ENCODE measurements at regions of chr19 and their contacts with region 1.

Region 1: DNA sequence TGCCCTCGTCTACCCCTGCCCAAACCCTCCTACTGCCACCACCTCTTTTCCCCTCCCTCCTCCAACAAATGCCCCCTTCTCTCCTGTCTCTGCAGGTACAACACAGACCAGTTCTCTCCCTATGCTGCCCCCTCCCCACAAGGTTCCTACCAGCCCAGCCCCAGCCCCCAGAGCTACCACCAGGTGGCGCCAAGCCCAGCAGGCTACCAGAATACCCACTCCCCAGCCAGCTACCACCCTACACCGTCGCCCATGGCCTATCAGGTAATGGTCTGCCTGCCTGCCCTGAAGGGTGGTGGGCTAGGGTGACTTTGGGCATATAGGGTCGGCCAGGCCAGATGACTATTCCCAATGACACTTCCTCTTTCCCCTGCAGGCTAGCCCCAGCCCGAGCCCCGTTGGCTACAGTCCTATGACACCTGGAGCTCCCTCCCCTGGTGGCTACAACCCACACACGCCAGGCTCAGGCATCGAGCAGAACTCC is 6.5 kb upstream of the TIMM50 start:
- DNase-seq: peak; percentile 90
- ATAC-seq: peak; percentile 90
- H3K4me3 Mint-ChIP-seq: no peak overlapping the region
- H3K27ac Mint-ChIP-seq: peak overlapping the region; percentile 56; the same call in 1 of the 2 replicates
- H3K4me1 Mint-ChIP-seq: peaks cover 3% of the 10 kb centered on the region; the same call in 1 of the 2 replicates
- H3K27me3 Mint-ChIP-seq: no peaks in the 10 kb centered on the region
- CTCF ChIP-seq: peak; percentile 93

Region 2: DNA sequence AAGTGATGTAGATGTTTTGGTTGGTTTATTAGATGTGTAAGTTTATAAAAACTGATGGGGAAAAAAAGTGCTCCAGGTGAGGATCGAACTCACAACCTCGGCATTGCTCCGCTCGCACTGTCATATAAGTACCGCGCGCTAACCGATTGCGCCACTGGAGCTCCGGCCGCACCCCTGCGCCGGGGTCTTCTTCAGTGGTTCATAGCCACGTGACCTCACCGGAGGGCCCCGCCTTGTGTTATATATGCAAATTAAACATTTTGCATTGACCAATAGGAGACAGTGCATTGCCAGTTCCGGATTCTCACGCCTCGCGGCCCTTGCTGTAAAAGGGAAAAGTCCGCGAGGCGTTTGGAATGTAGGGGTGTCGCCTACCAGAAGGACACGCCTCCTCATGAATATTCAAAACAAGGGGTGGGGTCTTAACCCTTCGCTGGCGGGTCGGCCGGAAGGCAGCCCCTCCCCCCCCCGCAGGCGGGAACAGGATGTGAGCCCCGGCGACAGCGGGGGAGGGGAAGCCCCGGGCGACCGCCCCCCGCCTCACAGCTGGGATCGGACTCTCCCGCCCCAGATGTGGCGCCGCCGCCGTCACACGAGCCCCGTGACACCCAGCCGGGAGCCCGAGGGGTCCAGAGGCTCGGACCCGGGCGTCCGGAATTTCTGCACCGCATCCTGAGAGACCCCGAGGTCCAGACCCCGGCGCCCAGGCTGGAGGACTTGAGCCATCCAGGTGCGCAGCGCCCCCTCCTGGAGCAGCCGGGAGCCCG is 61.9 kb before region 1 on chr19 and contains the start of gene PLEKHG2:
- CTCF ChIA-PET with region 1: interaction called, 10 read pairs
- POLR2A ChIA-PET with region 1: no interaction called
- DNase-seq: peak; percentile 98
- ATAC-seq: peak; percentile 64
- H3K4me3 Mint-ChIP-seq: peak within 1 kb of the TSS; percentile 99
- H3K27ac Mint-ChIP-seq: peak within 1 kb of the TSS; percentile 84
- H3K4me1 Mint-ChIP-seq: peaks cover 47% of the 10 kb centered on the region
- H3K27me3 Mint-ChIP-seq: no peaks in the 10 kb centered on the region
- CTCF ChIP-seq: no peak; the same call in none of the 2 replicates
- total RNA-seq, gene PLEKHG2: 62.3 to 72.0 TPM (median 63.6 TPM) in 3 replicates

Region 3: GRCh38 chr19:39435499-39436349 is 38.5 kb before region 1 on chr19 and contains the start of gene RPS16:
- CTCF ChIA-PET with region 1: interaction called, 16 read pairs
- POLR2A ChIA-PET with region 1: interaction called, 4 read pairs
- DNase-seq: peak; percentile 99
- ATAC-seq: peak; percentile 83
- H3K4me3 Mint-ChIP-seq: peak within 1 kb of the TSS; percentile 99
- H3K27ac Mint-ChIP-seq: peak within 1 kb of the TSS; percentile 99
- H3K4me1 Mint-ChIP-seq: peaks cover 47% of the 10 kb centered on the region
- H3K27me3 Mint-ChIP-seq: no peaks in the 10 kb centered on the region
- CTCF ChIP-seq: no peak
- total RNA-seq, gene RPS16: 2,962 to 3,158 TPM (median 2,999 TPM) in 3 replicates

Region 4: DNA sequence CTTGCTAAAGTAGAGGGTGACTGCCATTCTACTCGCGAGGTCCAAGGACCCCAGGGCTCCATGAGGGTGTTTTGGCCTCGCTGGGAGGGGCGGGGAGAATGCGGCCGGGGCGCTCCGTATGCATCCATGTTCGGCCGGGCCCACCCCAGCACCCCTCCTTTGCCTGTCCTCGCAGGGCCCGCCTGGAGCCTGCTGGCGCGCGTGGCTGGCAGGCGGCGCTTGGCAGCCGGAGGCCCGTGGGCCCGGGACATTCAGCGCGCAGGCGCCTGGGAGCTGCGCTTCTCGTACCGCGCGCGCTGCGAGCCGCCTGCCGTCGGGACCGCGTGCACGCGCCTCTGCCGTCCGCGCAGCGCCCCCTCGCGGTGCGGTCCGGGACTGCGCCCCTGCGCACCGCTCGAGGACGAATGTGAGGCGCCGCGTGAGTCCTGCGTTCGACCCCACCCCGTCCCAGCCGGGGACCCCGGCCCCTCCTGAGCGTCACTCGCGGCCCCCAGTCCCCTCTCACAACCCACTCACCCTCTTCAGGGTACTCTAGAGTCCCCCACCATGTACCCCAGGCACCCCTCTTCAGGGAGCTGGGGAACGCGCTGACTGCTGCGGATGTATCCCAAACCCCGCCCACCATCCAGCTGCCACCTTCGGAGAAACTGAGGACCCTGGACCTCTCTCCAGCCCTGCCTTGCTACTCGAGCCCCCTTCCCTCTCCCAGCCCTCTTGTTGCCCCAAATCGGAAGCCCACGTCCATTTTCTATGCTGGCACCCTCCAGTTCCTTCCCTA is 28.6 kb after region 1 on chr19:
- CTCF ChIA-PET with region 1: interaction called, 56 read pairs
- POLR2A ChIA-PET with region 1: interaction called, 5 read pairs
- DNase-seq: peak; percentile 80
- ATAC-seq: peak; percentile 8
- H3K4me3 Mint-ChIP-seq: no peak overlapping the region
- H3K27ac Mint-ChIP-seq: no peak overlapping the region
- H3K4me1 Mint-ChIP-seq: peaks cover 17% of the 10 kb centered on the region
- H3K27me3 Mint-ChIP-seq: peaks cover 95% of the 10 kb centered on the region
- CTCF ChIP-seq: peak; percentile 100

Region 5: GRCh38 chr19:39524495-39524894 is 50.3 kb after region 1 on chr19:
- CTCF ChIA-PET with region 1: interaction called, 24 read pairs
- POLR2A ChIA-PET with region 1: interaction called, 4 read pairs
- DNase-seq: no peak
- ATAC-seq: no peak
- H3K4me3 Mint-ChIP-seq: no peak overlapping the region
- H3K27ac Mint-ChIP-seq: no peak overlapping the region
- H3K4me1 Mint-ChIP-seq: no peaks in the 10 kb centered on the region
- H3K27me3 Mint-ChIP-seq: no peaks in the 10 kb centered on the region
- CTCF ChIP-seq: no peak

Region 6: DNA sequence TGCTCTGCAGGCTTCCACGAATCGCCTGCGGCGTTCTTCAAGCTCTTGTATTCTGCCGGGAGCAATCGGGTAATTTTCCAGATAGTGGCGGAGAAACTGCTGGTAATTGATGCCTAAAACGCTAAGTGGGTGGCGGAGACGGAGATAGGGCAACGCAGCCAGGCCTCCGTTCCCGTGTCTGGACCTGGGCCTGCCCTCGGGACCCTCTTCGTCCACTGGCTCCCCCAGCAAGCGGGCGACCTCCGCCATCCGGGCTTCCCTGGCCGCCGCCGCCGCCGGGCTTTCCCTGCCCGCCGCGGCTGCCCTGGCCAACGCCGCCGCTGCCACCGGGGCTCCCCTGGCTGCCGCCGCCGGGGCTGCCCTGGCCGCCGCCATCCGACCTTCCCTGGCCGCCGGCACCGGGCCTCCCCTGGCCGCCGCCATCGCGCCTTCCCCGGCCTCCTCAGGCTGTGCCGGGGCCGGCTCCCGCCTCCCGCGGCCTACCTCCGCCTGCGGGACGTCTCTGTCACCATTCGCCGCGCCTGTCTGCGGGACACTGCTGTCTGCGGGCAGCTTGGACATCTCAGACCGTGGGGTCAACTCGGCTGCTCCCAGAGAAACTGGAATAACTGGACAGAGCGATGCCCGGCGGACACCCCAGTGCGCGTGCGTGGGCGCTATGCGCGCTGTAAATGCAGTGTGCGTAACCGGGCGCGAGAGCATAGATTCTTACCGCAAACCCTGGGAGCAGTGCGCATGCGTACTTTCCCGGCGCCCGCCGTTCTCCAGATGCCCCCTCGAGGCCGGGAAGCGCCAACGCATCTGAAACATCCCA is 65.5 kb after region 1 on chr19 and contains the start of gene EID2:
- CTCF ChIA-PET with region 1: interaction called, 66 read pairs
- POLR2A ChIA-PET with region 1: no interaction called
- DNase-seq: peak; percentile 93
- ATAC-seq: peak; percentile 83
- H3K4me3 Mint-ChIP-seq: peak within 1 kb of the TSS; percentile 90
- H3K27ac Mint-ChIP-seq: peak within 1 kb of the TSS; percentile 89
- H3K4me1 Mint-ChIP-seq: peaks cover 31% of the 10 kb centered on the region
- H3K27me3 Mint-ChIP-seq: peaks cover 8% of the 10 kb centered on the region; the same call in 1 of the 2 replicates
- CTCF ChIP-seq: peak; percentile 62
- total RNA-seq, gene EID2: 21.5 to 24.0 TPM (median 23.7 TPM) in 3 replicates